ENCODE measurements at regions of chr7 and their contacts with region 1.

Region 1: GRCh38 chr7:127578036-127578684 is 7.2 kb downstream of the GCC1 start:
- DNase-seq: no peak
- H3K4me3 ChIP-seq: no peak overlapping the region
- H3K27ac ChIP-seq: no peak overlapping the region
- H3K4me1 ChIP-seq: peaks cover 0 to 3% of the 10 kb centered on the region in 2 donors
- H3K27me3 ChIP-seq: no peaks in the 10 kb centered on the region
- CTCF ChIP-seq: no peak
- POLR2A ChIP-seq: no peak

Region 2: GRCh38 chr7:127609297-127609696 is 31.1 kb after region 1 on chr7:
- intact Hi-C with region 1: no loop called
- DNase-seq: no peak
- H3K4me3 ChIP-seq: no peak overlapping the region
- H3K27ac ChIP-seq: no peak overlapping the region
- H3K4me1 ChIP-seq: no peaks in the 10 kb centered on the region
- H3K27me3 ChIP-seq: peaks cover 0 to under 1% of the 10 kb centered on the region in 2 donors
- CTCF ChIP-seq: no peak
- POLR2A ChIP-seq: no peak

Region 3: DNA sequence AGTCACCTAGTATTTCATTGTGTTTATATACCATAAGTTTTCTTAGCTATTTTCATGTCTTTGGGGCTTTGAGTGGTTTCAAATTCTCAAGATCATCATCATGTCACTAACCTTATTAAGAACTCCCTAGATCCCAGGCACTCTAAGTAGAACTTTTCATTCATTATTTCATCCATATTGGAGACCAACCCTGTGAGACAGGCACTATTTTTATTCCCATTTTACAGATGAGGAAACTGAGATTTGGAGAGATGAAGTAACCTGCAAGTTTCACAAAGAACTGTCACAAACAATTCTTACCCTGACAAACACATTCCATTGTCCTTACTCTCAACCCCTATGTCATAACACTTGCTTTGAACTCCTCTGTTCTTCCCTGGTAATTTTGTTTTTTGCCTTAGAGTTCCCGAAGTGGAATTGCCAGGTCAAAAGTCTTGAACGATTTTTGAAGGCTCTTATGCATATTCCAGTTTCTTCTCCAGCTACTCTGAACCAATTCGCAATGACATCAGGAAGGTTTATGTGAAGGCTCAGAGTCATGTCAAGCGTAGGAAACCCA is 60.1 kb after region 1 on chr7:
- intact Hi-C with region 1: loop called (anchors 2 kb)
- DNase-seq: no peak
- H3K4me3 ChIP-seq: no peak overlapping the region
- H3K27ac ChIP-seq: no peak overlapping the region
- H3K4me1 ChIP-seq: no peaks in the 10 kb centered on the region
- H3K27me3 ChIP-seq: no peaks in the 10 kb centered on the region
- CTCF ChIP-seq: no peak
- POLR2A ChIP-seq: no peak

Measured in breast epithelium (tissue), 4 donors.